H1 (cell line): ENCODE measurements at regions of chr6 and their contacts with region 1.

Region 1: GRCh38 chr6:11575408-11576033 is 38.0 kb downstream of the TMEM170B start:
- DNase-seq: peak; percentile 41 to 56
- H3K4me3 ChIP-seq: no peak overlapping the region
- H3K27ac ChIP-seq: no peak overlapping the region
- H3K4me1 ChIP-seq: no peaks in the 10 kb centered on the region
- H3K27me3 ChIP-seq: no peaks in the 10 kb centered on the region
- CTCF ChIP-seq: peak; percentile 72 to 97 (median 81)
- EP300 ChIP-seq: no peak
- POLR2A ChIP-seq: no peak
- RAD21 ChIP-seq: peak; percentile 92 to 94

Region 2: GRCh38 chr6:11473008-11473740 is 102.3 kb before region 1 on chr6:
- CTCF ChIA-PET with region 1: no interaction called
- POLR2A ChIA-PET with region 1: no interaction called
- DNase-seq: no peak
- H3K4me3 ChIP-seq: no peak overlapping the region
- H3K27ac ChIP-seq: no peak overlapping the region
- H3K4me1 ChIP-seq: no peaks in the 10 kb centered on the region
- H3K27me3 ChIP-seq: no peaks in the 10 kb centered on the region
- CTCF ChIP-seq: no peak
- EP300 ChIP-seq: no peak
- POLR2A ChIP-seq: no peak
- RAD21 ChIP-seq: no peak

Region 3: DNA sequence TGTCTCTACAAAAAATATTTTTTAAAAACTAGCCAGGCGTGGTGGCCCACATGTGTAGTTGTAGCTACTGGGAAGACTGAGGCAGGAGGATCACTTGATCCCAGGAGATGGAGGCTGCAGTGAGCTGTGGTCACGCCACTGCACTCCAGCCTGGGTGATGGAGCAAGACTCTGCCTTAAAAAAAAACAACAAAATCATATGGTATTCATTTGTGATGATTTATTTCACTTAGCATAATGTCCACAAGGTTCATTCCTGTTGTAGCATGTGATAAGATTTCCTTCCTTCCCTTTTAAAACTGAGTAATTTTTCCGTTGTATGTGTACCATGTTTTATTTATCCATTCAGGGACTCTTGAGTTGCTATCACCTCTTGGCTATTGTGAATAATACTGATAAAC is 11.7 kb before region 1 on chr6:
- CTCF ChIA-PET with region 1: interaction called, 28 read pairs
- POLR2A ChIA-PET with region 1: no interaction called
- DNase-seq: no peak
- H3K4me3 ChIP-seq: no peak overlapping the region
- H3K27ac ChIP-seq: no peak overlapping the region
- H3K4me1 ChIP-seq: peaks cover 0 to 2% (median 0%) of the 10 kb centered on the region in 4 experiments; a peak in 1 of 7 replicates
- H3K27me3 ChIP-seq: no peaks in the 10 kb centered on the region
- CTCF ChIP-seq: no peak
- EP300 ChIP-seq: no peak
- POLR2A ChIP-seq: no peak
- RAD21 ChIP-seq: no peak